ENCODE measurements at regions of chr12 and their contacts with region 1.

Region 1: GRCh38 chr12:6825398-6826124 is 2.6 kb upstream of the P3H3 start:
- DNase-seq: no peak
- H3K4me3 ChIP-seq: peak overlapping the region; percentile 12 to 19
- H3K27ac ChIP-seq: peak overlapping the region; percentile 20
- H3K4me1 ChIP-seq: peaks cover 62% of the 10 kb centered on the region
- H3K27me3 ChIP-seq: no peaks in the 10 kb centered on the region
- CTCF ChIP-seq: peak; percentile 77 to 87 (median 82)
- POLR2A ChIP-seq: no peak

Region 2: DNA sequence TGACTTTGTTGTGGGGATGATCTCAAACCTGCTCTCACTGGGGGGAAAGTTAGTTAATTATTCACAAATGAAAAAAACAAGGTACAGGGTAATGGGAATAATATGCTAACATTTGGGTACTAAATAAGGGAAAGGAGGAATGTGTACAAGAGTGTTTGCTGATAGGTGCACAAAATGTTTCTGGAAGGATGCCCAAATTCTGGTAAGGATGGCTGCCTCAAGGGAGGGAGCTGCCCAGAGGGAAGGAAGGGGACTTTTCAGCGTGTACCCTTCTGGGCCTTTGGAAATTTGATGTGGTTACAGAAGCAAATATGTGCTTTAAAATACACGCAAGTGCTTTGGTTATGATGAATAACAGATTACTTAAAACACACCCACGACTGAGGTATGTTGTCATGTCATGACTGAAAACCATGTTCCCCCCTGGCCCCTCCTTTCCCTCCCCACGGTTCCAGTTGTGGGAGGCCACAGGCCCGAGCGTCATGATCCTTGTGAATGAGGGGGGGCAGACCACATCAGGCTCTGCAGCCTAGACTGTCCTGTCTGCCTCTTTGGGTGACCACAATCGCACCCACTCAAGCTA is 558.3 kb before region 1 on chr12:
- intact Hi-C with region 1: no loop called
- DNase-seq: no peak
- H3K4me3 ChIP-seq: no peak overlapping the region
- H3K27ac ChIP-seq: no peak overlapping the region
- H3K4me1 ChIP-seq: peaks cover 8% of the 10 kb centered on the region
- H3K27me3 ChIP-seq: no peaks in the 10 kb centered on the region
- CTCF ChIP-seq: no peak
- POLR2A ChIP-seq: no peak

Region 3: GRCh38 chr12:6614513-6615172 is 210.9 kb before region 1 on chr12:
- intact Hi-C with region 1: loop called (anchors 5 kb)
- DNase-seq: no peak
- H3K4me3 ChIP-seq: no peak overlapping the region
- H3K27ac ChIP-seq: peak overlapping the region; percentile 94
- H3K4me1 ChIP-seq: peaks cover 33% of the 10 kb centered on the region
- H3K27me3 ChIP-seq: no peaks in the 10 kb centered on the region
- CTCF ChIP-seq: no peak
- POLR2A ChIP-seq: no peak

Region 4: DNA sequence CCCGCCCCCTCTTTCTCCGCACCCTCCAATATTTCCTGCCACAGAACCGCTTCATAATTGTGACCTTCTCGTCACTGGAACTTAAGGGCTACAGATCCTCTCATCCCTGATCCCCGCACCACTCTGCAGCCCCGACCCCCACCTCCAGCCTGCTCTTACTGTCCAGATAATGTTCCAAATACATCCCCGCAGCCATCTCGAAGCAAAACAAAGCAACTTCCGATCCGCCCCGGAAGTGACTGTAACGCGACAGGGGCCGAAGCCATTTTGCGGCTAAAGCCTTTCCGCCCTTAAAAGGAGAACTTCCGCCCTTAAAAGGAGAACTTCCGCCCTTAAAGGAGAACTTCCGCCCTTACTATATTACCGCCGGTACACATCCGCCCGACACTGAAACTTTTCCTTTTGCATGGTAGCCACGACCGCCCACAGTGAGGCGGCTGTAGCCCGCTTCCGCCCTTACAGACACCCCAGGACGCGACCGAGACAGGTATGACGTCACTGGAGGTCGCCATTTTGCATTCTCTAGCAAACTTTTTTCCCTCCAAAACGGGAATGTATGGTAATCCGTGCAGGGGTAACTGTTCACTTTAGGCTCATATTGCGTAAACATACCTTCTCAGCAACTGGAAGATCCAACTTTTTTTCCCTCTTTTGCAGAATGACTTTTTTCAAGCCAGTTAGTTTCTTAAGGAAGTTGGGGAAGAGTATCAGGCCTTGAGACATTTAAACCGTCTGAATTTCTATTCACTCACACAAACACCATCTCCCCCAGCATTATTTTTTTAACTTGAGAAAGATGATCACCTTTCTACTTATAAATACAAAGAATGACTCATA is 162.4 kb before region 1 on chr12 and contains the start of gene ING4:
- intact Hi-C with region 1: no loop called
- DNase-seq: peak in 1 of 2 donors; percentile 99
- H3K4me3 ChIP-seq: peak within 1 kb of the TSS; percentile 69 to 70
- H3K27ac ChIP-seq: peak within 1 kb of the TSS; percentile 68
- H3K4me1 ChIP-seq: peaks cover 15% of the 10 kb centered on the region
- H3K27me3 ChIP-seq: no peaks in the 10 kb centered on the region
- CTCF ChIP-seq: no peak
- POLR2A ChIP-seq: no peak
- total RNA-seq, gene ING4: 45.7 TPM

Region 5: GRCh38 chr12:6752921-6753771 is 72.4 kb before region 1 on chr12 and contains the start of gene MLF2:
- intact Hi-C with region 1: loop called (anchors 5 kb)
- DNase-seq: peak in 1 of 2 donors; percentile 99
- H3K4me3 ChIP-seq: peak within 1 kb of the TSS; percentile 70 to 91
- H3K27ac ChIP-seq: peak within 1 kb of the TSS; percentile 100
- H3K4me1 ChIP-seq: peaks cover 15% of the 10 kb centered on the region
- H3K27me3 ChIP-seq: no peaks in the 10 kb centered on the region
- CTCF ChIP-seq: peak in 1 of 3 experiments; percentile 92
- POLR2A ChIP-seq: peak; percentile 95 to 96
- total RNA-seq, gene MLF2: 150 TPM

Region 6: DNA sequence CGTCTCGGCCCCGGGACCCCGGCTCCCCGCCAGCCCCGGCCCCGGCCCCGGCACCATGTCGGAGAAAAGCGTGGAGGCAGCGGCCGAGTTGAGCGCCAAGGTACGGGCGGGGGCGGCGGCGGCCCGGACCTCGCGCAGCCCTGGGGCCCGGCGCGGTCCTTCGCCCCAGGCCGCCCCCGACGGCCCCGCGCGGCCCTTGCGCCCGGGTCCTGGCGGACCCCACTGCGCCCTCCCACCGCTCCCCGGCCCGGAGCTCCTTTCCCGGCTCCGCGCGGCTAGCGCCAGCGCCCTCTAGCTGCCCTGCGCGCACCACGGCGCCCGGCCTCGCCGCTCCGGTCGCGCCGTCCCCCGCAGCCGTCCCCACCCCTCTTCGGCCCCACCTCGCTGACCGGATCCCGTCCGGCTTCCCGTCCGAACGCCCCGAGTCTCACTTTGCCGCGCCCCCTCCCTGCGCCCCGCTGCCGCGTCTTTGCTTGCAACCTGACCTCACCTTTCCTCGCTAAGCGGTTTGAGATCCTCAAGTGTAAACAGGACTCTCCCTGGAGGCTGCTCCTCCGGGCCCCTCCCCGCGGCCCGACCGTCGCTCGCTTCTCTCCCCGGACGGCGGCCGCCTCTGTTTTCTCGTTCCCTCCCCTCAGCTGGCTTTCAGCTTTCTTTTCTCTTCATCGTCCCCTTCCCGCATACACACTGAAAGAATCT is 58.8 kb before region 1 on chr12:
- intact Hi-C with region 1: loop called (anchors 5 kb)
- DNase-seq: no peak
- H3K4me3 ChIP-seq: peak overlapping the region; percentile 75 to 98
- H3K27ac ChIP-seq: peak overlapping the region; percentile 97
- H3K4me1 ChIP-seq: peaks cover 68% of the 10 kb centered on the region
- H3K27me3 ChIP-seq: no peaks in the 10 kb centered on the region
- CTCF ChIP-seq: peak in 2 of 3 experiments; percentile 27 to 42
- POLR2A ChIP-seq: peak in 1 of 2 donors; percentile 35

Region 7: GRCh38 chr12:6778574-6779550 is 46.7 kb before region 1 on chr12:
- intact Hi-C with region 1: loop called (anchors 2 kb)
- DNase-seq: no peak
- H3K4me3 ChIP-seq: peak overlapping the region; percentile 40 to 51
- H3K27ac ChIP-seq: peak overlapping the region; percentile 82
- H3K4me1 ChIP-seq: peaks cover 14% of the 10 kb centered on the region
- H3K27me3 ChIP-seq: no peaks in the 10 kb centered on the region
- CTCF ChIP-seq: peak; percentile 86 to 100 (median 98)
- POLR2A ChIP-seq: no peak

Measured in vagina (tissue), 2 donors.